Heart right ventricle (tissue), 16 donors: ENCODE measurements at regions of chr2 and their contacts with region 1.

Region 1: GRCh38 chr2:68751397-68752339 is 17.1 kb downstream of the ARHGAP25 start:
- DNase-seq: peak; percentile 88 to 92
- ATAC-seq: peak; percentile 92 to 97 (median 94)
- H3K4me3 ChIP-seq: peak overlapping the region in 3 of 10 donors; percentile 23 to 32 (median 30)
- H3K27ac ChIP-seq: peak overlapping the region in 4 of 10 donors; percentile 0 to 45 (median 16)
- H3K4me1 ChIP-seq: peaks cover 0 to 80% (median 25%) of the 10 kb centered on the region in 9 donors
- H3K27me3 ChIP-seq: no peaks in the 10 kb centered on the region
- CTCF ChIP-seq: peak; percentile 82 to 98 (median 94)

Region 2: GRCh38 chr2:68774569-68775271 is 23.1 kb after region 1 on chr2:
- intact Hi-C with region 1: loop called in 1 of 10 experiments (anchors 2 kb)
- DNase-seq: peak; percentile 70 to 84
- ATAC-seq: peak; percentile 84 to 91 (median 88)
- H3K4me3 ChIP-seq: peak overlapping the region; percentile 14 to 66 (median 55)
- H3K27ac ChIP-seq: peak overlapping the region; percentile 69 to 94 (median 86)
- H3K4me1 ChIP-seq: peaks cover 5 to 90% (median 68%) of the 10 kb centered on the region in 9 donors
- H3K27me3 ChIP-seq: no peaks in the 10 kb centered on the region
- CTCF ChIP-seq: peak in 1 of 9 donors; percentile 5

Region 3: GRCh38 chr2:68837164-68837860 is 85.6 kb after region 1 on chr2:
- intact Hi-C with region 1: loop called in 7 of 10 experiments (anchors 1 to 5 kb)
- DNase-seq: peak; percentile 73 to 76
- ATAC-seq: peak in 7 of 8 donors; percentile 60 to 82 (median 65)
- H3K4me3 ChIP-seq: no peak overlapping the region
- H3K27ac ChIP-seq: peak overlapping the region in 2 of 10 donors; percentile 43 to 90
- H3K4me1 ChIP-seq: peaks cover 0 to 56% (median 13%) of the 10 kb centered on the region in 9 donors
- H3K27me3 ChIP-seq: no peaks in the 10 kb centered on the region
- CTCF ChIP-seq: peak; percentile 42 to 82 (median 66)